ENCODE measurements at regions of chr1 and their contacts with region 1.

Region 1: GRCh38 chr1:31548907-31549808 is 27.2 kb upstream of the TINAGL1 start:
- DNase-seq: peak; percentile 88 to 92 (median 90)
- ATAC-seq: peak; percentile 96
- H3K4me3 ChIP-seq: no peak overlapping the region
- H3K27ac ChIP-seq: no peak overlapping the region; the same call in 2 of the 3 replicates
- H3K4me1 ChIP-seq: peaks cover 13 to 15% of the 10 kb centered on the region in 2 experiments; a peak in 4 of 5 replicates
- H3K27me3 ChIP-seq: peaks cover 0 to 5% of the 10 kb centered on the region in 2 experiments; a peak in 1 of 5 replicates
- CTCF ChIP-seq: peak; percentile 89 to 99 (median 98)
- EP300 ChIP-seq: no peak
- POLR2A ChIP-seq: no peak
- RAD21 ChIP-seq: peak; percentile 98 to 99

Region 2: DNA sequence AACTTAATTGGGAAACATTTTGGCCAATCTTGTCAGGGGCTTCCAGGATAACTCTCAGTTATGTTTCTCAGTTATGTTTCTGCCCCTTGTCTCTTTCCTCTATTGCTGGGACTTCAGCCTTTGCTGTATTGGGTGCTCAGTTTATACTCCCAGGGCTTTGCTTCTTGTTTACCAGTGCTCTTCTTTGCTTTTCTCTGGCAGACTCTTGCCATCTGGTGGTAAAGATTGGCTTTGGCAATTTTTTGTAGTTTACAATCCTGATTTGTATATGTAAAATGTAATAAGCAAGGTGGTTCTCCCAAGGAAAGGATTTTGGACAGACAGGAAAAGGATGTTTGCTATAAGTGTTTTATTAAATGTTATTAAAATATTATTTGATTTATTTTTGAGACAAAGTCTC is 214.2 kb before region 1 on chr1:
- CTCF ChIA-PET with region 1: no interaction called
- POLR2A ChIA-PET with region 1: no interaction called
- in situ Hi-C with region 1: no loop called
- intact Hi-C with region 1: no loop called
- DNase-seq: peak in 2 of 4 experiments; percentile 13 to 24
- ATAC-seq: peak; percentile 72
- H3K4me3 ChIP-seq: no peak overlapping the region
- H3K27ac ChIP-seq: no peak overlapping the region
- H3K4me1 ChIP-seq: no peaks in the 10 kb centered on the region
- H3K27me3 ChIP-seq: no peaks in the 10 kb centered on the region
- CTCF ChIP-seq: peak; percentile 46 to 69 (median 47); a peak in 5 of 6 replicates
- EP300 ChIP-seq: no peak
- POLR2A ChIP-seq: no peak
- RAD21 ChIP-seq: peak; percentile 45 to 63

Region 3: DNA sequence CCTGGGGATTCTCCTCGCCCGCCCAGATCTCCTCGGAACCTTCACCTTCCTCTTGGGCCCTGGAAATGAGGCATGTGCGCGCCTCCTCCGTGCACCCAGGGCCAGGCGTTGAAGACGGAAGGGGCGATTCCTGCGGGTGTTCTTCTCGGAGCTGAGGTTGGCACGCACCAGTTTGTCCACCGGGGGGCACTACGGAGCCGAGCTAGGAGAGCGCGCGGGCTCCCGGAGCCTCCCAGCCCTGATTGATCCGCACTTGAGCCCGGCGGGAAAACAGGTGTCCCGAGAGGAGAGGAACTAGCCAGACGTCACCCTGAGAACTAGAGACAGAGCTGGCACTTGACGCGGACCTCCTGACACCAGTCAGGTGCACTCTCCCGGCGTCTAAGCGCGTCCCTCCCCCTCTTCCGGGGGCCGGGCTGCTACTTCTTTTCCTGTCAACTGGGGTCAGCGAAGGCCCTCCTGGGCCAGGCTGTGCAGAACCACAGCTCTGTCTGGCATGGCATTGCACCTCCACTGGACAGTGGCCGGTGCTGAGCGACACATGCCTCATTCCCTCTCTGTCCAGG is 154.4 kb before region 1 on chr1:
- CTCF ChIA-PET with region 1: interaction called, 21 read pairs
- POLR2A ChIA-PET with region 1: no interaction called
- in situ Hi-C with region 1: no loop called
- intact Hi-C with region 1: loop called (anchors 1 kb)
- DNase-seq: peak; percentile 86 to 88 (median 87)
- ATAC-seq: peak; percentile 97
- H3K4me3 ChIP-seq: peak overlapping the region; percentile 33
- H3K27ac ChIP-seq: no peak overlapping the region
- H3K4me1 ChIP-seq: peaks cover 8 to 12% of the 10 kb centered on the region in 2 experiments; a peak in 4 of 5 replicates
- H3K27me3 ChIP-seq: peaks cover 2 to 16% of the 10 kb centered on the region in 2 experiments; a peak in 3 of 5 replicates
- CTCF ChIP-seq: peak; percentile 86 to 92 (median 92)
- EP300 ChIP-seq: no peak
- POLR2A ChIP-seq: no peak
- RAD21 ChIP-seq: peak; percentile 82 to 89

Region 4: DNA sequence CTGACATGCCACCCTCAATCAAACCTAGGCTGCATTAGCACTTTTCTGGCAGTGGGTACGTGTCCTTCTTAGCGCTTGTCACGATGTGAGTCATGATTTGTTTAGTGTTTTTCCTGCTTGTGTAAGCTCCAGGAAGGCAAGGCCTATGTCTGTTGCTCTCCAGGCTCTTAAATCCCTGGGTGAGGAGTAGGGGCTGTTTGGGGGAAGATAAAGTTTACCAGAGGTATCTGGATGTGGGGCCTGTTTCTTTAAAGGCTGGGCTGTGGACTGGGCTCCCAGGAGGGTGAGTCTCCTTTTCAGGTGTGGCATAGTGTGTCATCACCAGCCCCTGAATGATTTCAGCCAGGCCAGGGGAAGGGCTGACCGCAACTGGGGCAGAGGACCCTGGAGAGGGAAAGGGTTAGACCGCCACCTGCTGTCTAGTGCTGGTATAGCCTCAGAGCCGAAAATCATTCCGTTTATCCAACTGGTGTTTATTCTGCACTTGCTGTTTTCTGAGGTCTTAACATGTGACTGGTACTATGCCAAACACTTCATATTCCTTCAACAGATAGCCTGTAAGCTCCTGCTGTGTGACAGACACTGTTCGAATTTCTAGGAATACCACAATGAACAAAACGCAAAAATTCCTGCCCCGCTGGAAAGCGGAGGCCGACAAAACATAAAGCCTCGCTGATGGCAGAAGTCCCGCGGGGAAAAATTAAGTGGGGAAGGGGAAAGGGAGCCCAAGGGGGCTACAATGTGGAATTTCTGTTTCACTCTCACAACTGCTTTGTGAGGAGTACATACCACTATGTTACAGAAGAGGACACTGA is 126.4 kb before region 1 on chr1:
- CTCF ChIA-PET with region 1: interaction called, 36 read pairs
- POLR2A ChIA-PET with region 1: interaction called, 3 read pairs
- in situ Hi-C with region 1: no loop called
- intact Hi-C with region 1: loop called (anchors 10 kb)
- DNase-seq: peak; percentile 82 to 87 (median 83)
- ATAC-seq: peak; percentile 90
- H3K4me3 ChIP-seq: no peak overlapping the region
- H3K27ac ChIP-seq: no peak overlapping the region
- H3K4me1 ChIP-seq: peaks cover 0 to 12% of the 10 kb centered on the region in 2 experiments; a peak in 1 of 5 replicates
- H3K27me3 ChIP-seq: peaks cover 6 to 38% of the 10 kb centered on the region in 2 experiments; a peak in 3 of 5 replicates
- CTCF ChIP-seq: peak; percentile 92 to 99 (median 99)
- EP300 ChIP-seq: no peak
- POLR2A ChIP-seq: no peak
- RAD21 ChIP-seq: peak; percentile 97 to 98

Region 5: DNA sequence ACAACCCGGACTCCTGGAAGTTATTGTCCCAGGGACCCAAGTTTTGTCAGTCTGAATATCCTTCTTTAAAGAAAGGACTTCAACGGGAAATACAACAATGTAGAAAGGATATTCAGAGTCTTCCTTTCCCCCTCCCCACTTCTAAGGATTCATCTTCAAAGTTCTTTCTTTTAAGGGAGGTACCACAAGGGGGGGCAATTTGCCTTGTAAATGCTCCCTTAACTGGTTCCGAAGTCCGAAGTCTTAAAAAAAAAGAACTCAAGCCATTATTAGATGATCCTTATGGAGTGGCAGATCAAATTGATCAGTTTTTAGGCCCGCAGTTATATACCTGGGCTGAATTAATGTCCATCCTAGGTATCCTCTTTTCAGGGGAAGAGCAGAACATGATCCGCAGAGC is 89.1 kb before region 1 on chr1:
- CTCF ChIA-PET with region 1: interaction called, 68 read pairs
- POLR2A ChIA-PET with region 1: interaction called, 3 read pairs
- in situ Hi-C with region 1: loop called (anchors 5 kb)
- intact Hi-C with region 1: loop called (anchors 1 kb)
- DNase-seq: peak; percentile 31 to 45 (median 34)
- ATAC-seq: no peak
- H3K4me3 ChIP-seq: no peak overlapping the region
- H3K27ac ChIP-seq: no peak overlapping the region
- H3K4me1 ChIP-seq: no peaks in the 10 kb centered on the region
- H3K27me3 ChIP-seq: peaks cover 2 to 4% of the 10 kb centered on the region in 2 experiments; a peak in 2 of 5 replicates
- CTCF ChIP-seq: peak; percentile 40 to 68 (median 53); a peak in 5 of 6 replicates
- EP300 ChIP-seq: no peak
- POLR2A ChIP-seq: no peak
- RAD21 ChIP-seq: peak; percentile 63 to 87

Region 6: DNA sequence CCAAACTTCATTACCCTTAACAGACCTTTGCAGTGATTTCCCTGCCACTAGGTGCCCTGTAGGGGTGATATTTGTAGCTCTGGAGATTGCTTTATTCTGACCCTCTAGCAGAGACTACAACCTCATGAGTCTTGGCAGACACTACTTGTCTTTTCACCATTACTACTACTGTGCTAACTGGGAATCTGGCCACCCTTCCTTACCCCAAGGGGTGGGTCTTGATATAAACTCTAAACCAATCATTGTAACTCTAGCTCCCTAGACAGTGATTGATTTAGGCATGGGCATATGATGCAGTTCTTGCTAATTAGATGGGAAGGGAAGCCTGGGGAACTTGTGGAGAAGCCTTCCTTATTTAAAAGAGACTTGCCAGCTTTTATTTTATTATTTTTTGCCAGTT is 562.6 kb after region 1 on chr1:
- CTCF ChIA-PET with region 1: no interaction called
- POLR2A ChIA-PET with region 1: no interaction called
- in situ Hi-C with region 1: no loop called
- intact Hi-C with region 1: no loop called
- DNase-seq: peak in 1 of 4 experiments; percentile 27
- ATAC-seq: no peak
- H3K4me3 ChIP-seq: no peak overlapping the region
- H3K27ac ChIP-seq: no peak overlapping the region
- H3K4me1 ChIP-seq: peaks cover 19 to 44% of the 10 kb centered on the region in 2 experiments; a peak in 4 of 5 replicates
- H3K27me3 ChIP-seq: no peaks in the 10 kb centered on the region
- CTCF ChIP-seq: no peak
- EP300 ChIP-seq: no peak
- POLR2A ChIP-seq: no peak
- RAD21 ChIP-seq: no peak